Activated CD8-positive, alpha-beta T cell treated with anti-CD3 and anti-CD28 coated beads for 36 hours (primary cell): ENCODE measurements at regions of chr6 and their contacts with region 1.

Region 1: GRCh38 chr6:32576250-32576649 is 13.4 kb downstream of the HLA-DRB1 start:
- DNase-seq: no peak
- ATAC-seq: no peak
- H3K4me3 Mint-ChIP-seq: no peak overlapping the region
- H3K27ac Mint-ChIP-seq: no peak overlapping the region
- H3K4me1 Mint-ChIP-seq: peaks cover 13% of the 10 kb centered on the region
- H3K27me3 Mint-ChIP-seq: peaks cover 1% of the 10 kb centered on the region
- CTCF ChIP-seq: no peak

Region 2: GRCh38 chr6:32483968-32484636 is 92.1 kb before region 1 on chr6:
- CTCF ChIA-PET with region 1: no interaction called
- POLR2A ChIA-PET with region 1: no interaction called
- intact Hi-C with region 1: loop called (anchors 10 kb)
- DNase-seq: no peak
- ATAC-seq: no peak
- H3K4me3 Mint-ChIP-seq: no peak overlapping the region
- H3K27ac Mint-ChIP-seq: no peak overlapping the region
- H3K4me1 Mint-ChIP-seq: no peaks in the 10 kb centered on the region
- H3K27me3 Mint-ChIP-seq: peaks cover 14% of the 10 kb centered on the region
- CTCF ChIP-seq: no peak